ENCODE measurements at regions of chr10 and their contacts with region 1.

Region 1: GRCh38 chr10:114550756-114551635 is 107.1 kb downstream of the ABLIM1 start:
- DNase-seq: peak in 1 of 9 experiments; percentile 53
- ATAC-seq: no peak
- H3K4me3 ChIP-seq: no peak overlapping the region
- H3K4me3 Mint-ChIP-seq: no peak overlapping the region
- H3K27ac ChIP-seq: no peak overlapping the region
- H3K27ac Mint-ChIP-seq: no peak overlapping the region
- H3K4me1 ChIP-seq: peaks cover 30% of the 10 kb centered on the region
- H3K4me1 Mint-ChIP-seq: peaks cover 34% of the 10 kb centered on the region
- H3K27me3 ChIP-seq: no peaks in the 10 kb centered on the region
- H3K27me3 Mint-ChIP-seq: no peaks in the 10 kb centered on the region
- CTCF ChIP-seq: peak; percentile 80

Region 2: DNA sequence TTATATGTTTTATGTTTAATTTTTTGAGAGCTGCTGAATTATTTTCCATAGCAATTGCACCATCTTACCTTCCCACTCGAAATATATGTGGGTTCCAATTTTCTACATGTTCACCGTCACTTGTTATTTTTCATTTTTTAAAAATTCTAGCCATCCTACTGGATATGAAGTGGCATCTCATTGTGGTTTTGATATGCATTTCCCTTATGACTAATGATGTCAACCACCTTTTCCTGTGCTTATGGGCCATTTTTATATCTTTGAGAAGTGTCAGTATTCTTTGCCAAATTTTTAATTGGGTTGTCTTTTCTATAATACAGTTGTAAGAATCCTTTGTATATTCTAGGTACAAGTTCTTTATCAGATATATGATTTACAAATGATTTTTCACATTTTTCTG is 668.8 kb before region 1 on chr10:
- CTCF ChIA-PET with region 1: no interaction called
- POLR2A ChIA-PET with region 1: no interaction called
- intact Hi-C with region 1: no loop called
- DNase-seq: peak in 2 of 9 experiments; percentile 7 to 39
- ATAC-seq: no peak
- H3K4me3 ChIP-seq: no peak overlapping the region
- H3K4me3 Mint-ChIP-seq: no peak overlapping the region
- H3K27ac ChIP-seq: no peak overlapping the region
- H3K27ac Mint-ChIP-seq: no peak overlapping the region
- H3K4me1 ChIP-seq: no peaks in the 10 kb centered on the region
- H3K4me1 Mint-ChIP-seq: peaks cover 14% of the 10 kb centered on the region
- H3K27me3 ChIP-seq: no peaks in the 10 kb centered on the region
- H3K27me3 Mint-ChIP-seq: no peaks in the 10 kb centered on the region
- CTCF ChIP-seq: no peak

Region 3: GRCh38 chr10:114515298-114515914 is 35.6 kb before region 1 on chr10:
- CTCF ChIA-PET with region 1: interaction called, 312 read pairs
- POLR2A ChIA-PET with region 1: interaction called, 4 read pairs
- intact Hi-C with region 1: loop called in 1 of 2 experiments (anchors 5 kb)
- DNase-seq: peak in 1 of 9 experiments; percentile 27
- ATAC-seq: peak; percentile 13
- H3K4me3 ChIP-seq: peak overlapping the region in 1 of 2 experiments; percentile 24
- H3K4me3 Mint-ChIP-seq: peak overlapping the region; percentile 77
- H3K27ac ChIP-seq: peak overlapping the region in 1 of 2 experiments; percentile 4
- H3K27ac Mint-ChIP-seq: peak overlapping the region; percentile 97
- H3K4me1 ChIP-seq: peaks cover 89% of the 10 kb centered on the region
- H3K4me1 Mint-ChIP-seq: peaks cover 98% of the 10 kb centered on the region
- H3K27me3 ChIP-seq: no peaks in the 10 kb centered on the region
- H3K27me3 Mint-ChIP-seq: no peaks in the 10 kb centered on the region
- CTCF ChIP-seq: no peak

Region 4: DNA sequence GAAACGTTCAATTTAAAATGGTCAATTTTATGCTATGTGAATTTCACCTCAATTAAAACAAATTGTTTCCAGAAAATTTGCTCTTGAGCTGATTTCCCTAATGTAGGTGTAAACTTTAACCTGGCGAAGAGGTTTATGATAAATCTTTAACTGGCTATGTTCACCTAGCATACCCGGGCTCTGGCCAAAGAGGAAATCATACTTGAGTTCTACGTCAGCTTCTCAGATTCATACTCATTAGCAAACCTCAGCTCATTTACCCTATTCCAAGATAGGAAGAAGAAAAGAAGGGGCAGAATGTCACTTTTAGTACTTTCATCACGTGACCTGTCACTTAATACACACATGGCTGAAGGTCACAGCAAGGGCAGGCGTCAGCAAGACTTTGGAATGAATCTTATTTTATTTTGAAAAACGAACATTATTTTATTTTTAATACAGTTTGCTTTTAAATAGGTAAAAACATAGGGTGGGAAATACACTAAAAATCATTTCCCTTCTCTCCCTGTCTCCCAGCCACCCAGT is 10.1 kb after region 1 on chr10:
- CTCF ChIA-PET with region 1: interaction called, 19 read pairs
- POLR2A ChIA-PET with region 1: no interaction called
- intact Hi-C with region 1: no loop called
- DNase-seq: no peak
- ATAC-seq: no peak
- H3K4me3 ChIP-seq: no peak overlapping the region
- H3K4me3 Mint-ChIP-seq: no peak overlapping the region
- H3K27ac ChIP-seq: no peak overlapping the region
- H3K27ac Mint-ChIP-seq: no peak overlapping the region
- H3K4me1 ChIP-seq: no peaks in the 10 kb centered on the region
- H3K4me1 Mint-ChIP-seq: no peaks in the 10 kb centered on the region
- H3K27me3 ChIP-seq: no peaks in the 10 kb centered on the region
- H3K27me3 Mint-ChIP-seq: no peaks in the 10 kb centered on the region
- CTCF ChIP-seq: no peak

Region 5: DNA sequence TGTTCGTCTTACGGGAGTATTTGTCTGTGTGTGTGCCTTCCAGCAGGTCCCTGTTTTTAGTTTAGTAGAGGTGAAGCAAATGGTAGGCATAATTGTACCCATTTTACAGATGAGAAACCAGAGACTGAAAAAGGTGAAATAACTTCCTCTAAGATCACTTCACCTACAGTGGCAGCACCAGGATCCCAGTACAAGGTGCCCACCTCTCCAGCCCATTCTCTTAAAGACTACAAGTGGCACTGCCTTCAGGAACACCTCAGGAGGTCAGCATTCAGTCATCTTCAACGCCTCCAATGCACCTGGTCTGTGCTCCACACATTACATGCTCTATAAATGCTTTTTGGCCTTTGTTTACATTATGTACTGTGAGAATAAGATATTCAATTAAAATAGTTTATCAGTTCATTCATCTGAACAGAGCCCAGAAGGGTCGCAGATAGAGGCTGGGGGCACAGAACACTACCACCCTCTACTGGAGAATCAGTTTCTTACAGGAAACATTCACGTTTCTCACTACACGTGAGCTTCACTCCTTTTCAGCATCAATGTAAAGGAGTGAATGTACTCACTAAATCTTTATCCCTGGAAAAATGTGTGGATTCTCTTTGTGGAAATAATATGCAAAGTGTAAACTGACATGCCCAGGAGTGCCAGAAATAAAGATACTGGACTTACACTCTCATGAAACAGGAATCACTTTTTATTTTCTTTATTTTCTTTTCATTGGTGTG is 152.5 kb after region 1 on chr10:
- CTCF ChIA-PET with region 1: interaction called, 5 read pairs
- POLR2A ChIA-PET with region 1: no interaction called
- intact Hi-C with region 1: loop called (anchors 1 to 2 kb)
- DNase-seq: peak in 4 of 9 experiments; percentile 16 to 59 (median 42)
- ATAC-seq: peak; percentile 77
- H3K4me3 ChIP-seq: no peak overlapping the region
- H3K4me3 Mint-ChIP-seq: no peak overlapping the region
- H3K27ac ChIP-seq: no peak overlapping the region
- H3K27ac Mint-ChIP-seq: no peak overlapping the region
- H3K4me1 ChIP-seq: no peaks in the 10 kb centered on the region
- H3K4me1 Mint-ChIP-seq: no peaks in the 10 kb centered on the region
- H3K27me3 ChIP-seq: no peaks in the 10 kb centered on the region
- H3K27me3 Mint-ChIP-seq: peaks cover 4% of the 10 kb centered on the region
- CTCF ChIP-seq: peak; percentile 64

Region 6: DNA sequence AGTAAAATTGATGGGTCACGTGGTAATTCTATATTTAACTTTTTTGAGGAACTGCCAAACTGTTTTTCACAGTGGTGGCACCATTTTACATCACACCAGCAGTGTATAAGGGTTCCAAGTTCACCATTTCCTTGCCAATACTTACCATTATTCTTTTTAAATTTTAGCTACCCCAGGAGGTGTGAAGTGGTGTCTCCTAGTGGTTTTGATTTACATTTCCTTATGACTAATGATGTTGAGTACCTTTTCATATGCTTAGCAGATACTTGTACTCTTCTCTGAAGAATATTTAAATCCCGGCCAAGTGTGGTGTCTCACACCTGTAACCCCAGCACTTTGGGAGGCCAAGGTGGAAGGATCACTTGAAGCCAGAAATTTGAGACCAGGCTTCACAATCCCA is 299.1 kb after region 1 on chr10:
- CTCF ChIA-PET with region 1: no interaction called
- POLR2A ChIA-PET with region 1: no interaction called
- intact Hi-C with region 1: no loop called
- DNase-seq: no peak
- ATAC-seq: no peak
- H3K4me3 ChIP-seq: no peak overlapping the region
- H3K4me3 Mint-ChIP-seq: no peak overlapping the region
- H3K27ac ChIP-seq: no peak overlapping the region
- H3K27ac Mint-ChIP-seq: no peak overlapping the region
- H3K4me1 ChIP-seq: no peaks in the 10 kb centered on the region
- H3K4me1 Mint-ChIP-seq: peaks cover 2% of the 10 kb centered on the region
- H3K27me3 ChIP-seq: no peaks in the 10 kb centered on the region
- H3K27me3 Mint-ChIP-seq: no peaks in the 10 kb centered on the region
- CTCF ChIP-seq: no peak

Region 7: GRCh38 chr10:114876602-114877300 is 325.8 kb after region 1 on chr10:
- CTCF ChIA-PET with region 1: no interaction called
- POLR2A ChIA-PET with region 1: no interaction called
- intact Hi-C with region 1: loop called (anchors 1 to 5 kb)
- DNase-seq: peak in 4 of 9 experiments; percentile 2 to 42 (median 18)
- ATAC-seq: no peak
- H3K4me3 ChIP-seq: no peak overlapping the region
- H3K4me3 Mint-ChIP-seq: no peak overlapping the region
- H3K27ac ChIP-seq: no peak overlapping the region
- H3K27ac Mint-ChIP-seq: no peak overlapping the region
- H3K4me1 ChIP-seq: no peaks in the 10 kb centered on the region
- H3K4me1 Mint-ChIP-seq: peaks cover 10% of the 10 kb centered on the region
- H3K27me3 ChIP-seq: peaks cover 0 to 2% of the 10 kb centered on the region in 2 experiments
- H3K27me3 Mint-ChIP-seq: peaks cover 38% of the 10 kb centered on the region
- CTCF ChIP-seq: peak; percentile 36